HepG2 (cell line): ENCODE measurements at regions of chr6 and their contacts with region 1.

Region 1: DNA sequence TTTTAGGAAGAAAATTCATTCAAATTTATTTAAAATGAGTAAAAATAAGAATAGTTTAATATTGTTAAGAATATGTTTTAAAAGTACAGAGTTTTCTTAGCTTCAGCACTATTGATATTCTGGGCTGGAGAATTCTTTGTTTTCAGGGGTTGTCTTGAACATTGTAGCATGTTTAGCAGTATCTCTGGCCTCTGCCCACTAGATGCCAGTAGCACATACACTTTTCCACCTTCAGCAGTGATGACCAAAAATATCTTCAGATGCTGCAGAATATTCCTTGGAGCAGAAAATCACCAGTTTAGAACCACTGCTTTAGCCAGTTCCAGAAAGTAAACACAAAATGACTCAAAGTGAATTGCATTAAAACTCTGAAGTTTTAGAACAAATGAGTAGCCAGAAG is 19.4 kb upstream of the SDHAF4 start:
- DNase-seq: no peak
- ATAC-seq: 0 out of 3 replicates have a peak, but pooled peaks have one; percentile 50
- H3K4me3 ChIP-seq: no peak overlapping the region
- H3K27ac ChIP-seq: no peak overlapping the region
- H3K4me1 ChIP-seq: no peaks in the 10 kb centered on the region
- H3K27me3 ChIP-seq: no peaks in the 10 kb centered on the region
- CTCF ChIP-seq: peak; percentile 50
- EP300 ChIP-seq: no peak
- POLR2A ChIP-seq: no peak
- RAD21 ChIP-seq: no peak

Region 2: DNA sequence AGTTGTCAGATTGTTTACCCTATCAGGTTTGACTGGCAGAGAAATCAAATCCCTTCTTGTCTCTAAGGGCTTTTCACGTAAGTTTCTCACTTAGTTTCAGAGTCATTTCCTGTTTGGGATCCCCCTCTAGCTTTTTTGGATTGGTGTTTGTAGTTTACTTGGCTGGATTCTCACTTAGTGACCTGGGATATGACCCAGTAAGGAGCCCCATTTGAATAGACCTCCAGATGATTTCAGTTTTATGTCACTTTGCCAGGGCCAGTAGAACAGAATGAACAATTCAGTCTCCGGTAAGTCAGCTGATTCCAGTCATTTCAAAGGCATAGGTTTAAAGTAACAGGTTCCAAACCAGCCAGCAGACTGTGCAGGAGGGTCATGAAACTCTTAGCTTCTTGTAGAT is 125.8 kb before region 1 on chr6:
- CTCF ChIA-PET with region 1: no interaction called
- POLR2A ChIA-PET with region 1: no interaction called
- in situ Hi-C with region 1: no loop called
- intact Hi-C with region 1: no loop called
- DNase-seq: no peak
- ATAC-seq: no peak
- H3K4me3 ChIP-seq: no peak overlapping the region
- H3K27ac ChIP-seq: no peak overlapping the region
- H3K4me1 ChIP-seq: peaks cover 33% of the 10 kb centered on the region
- H3K27me3 ChIP-seq: no peaks in the 10 kb centered on the region
- CTCF ChIP-seq: no peak
- EP300 ChIP-seq: no peak
- POLR2A ChIP-seq: no peak
- RAD21 ChIP-seq: no peak

Region 3: GRCh38 chr6:70673601-70674000 is 126.3 kb after region 1 on chr6:
- CTCF ChIA-PET with region 1: no interaction called
- POLR2A ChIA-PET with region 1: no interaction called
- in situ Hi-C with region 1: loop called (anchors 10 kb)
- intact Hi-C with region 1: no loop called
- DNase-seq: no peak
- ATAC-seq: no peak
- H3K4me3 ChIP-seq: no peak overlapping the region
- H3K27ac ChIP-seq: no peak overlapping the region
- H3K4me1 ChIP-seq: peaks cover 42% of the 10 kb centered on the region
- H3K27me3 ChIP-seq: no peaks in the 10 kb centered on the region
- CTCF ChIP-seq: no peak
- EP300 ChIP-seq: no peak
- POLR2A ChIP-seq: no peak
- RAD21 ChIP-seq: no peak